Left ventricle myocardium superior (tissue), 1 donor: ENCODE measurements at regions of chr3 and their contacts with region 1.

Region 1: DNA sequence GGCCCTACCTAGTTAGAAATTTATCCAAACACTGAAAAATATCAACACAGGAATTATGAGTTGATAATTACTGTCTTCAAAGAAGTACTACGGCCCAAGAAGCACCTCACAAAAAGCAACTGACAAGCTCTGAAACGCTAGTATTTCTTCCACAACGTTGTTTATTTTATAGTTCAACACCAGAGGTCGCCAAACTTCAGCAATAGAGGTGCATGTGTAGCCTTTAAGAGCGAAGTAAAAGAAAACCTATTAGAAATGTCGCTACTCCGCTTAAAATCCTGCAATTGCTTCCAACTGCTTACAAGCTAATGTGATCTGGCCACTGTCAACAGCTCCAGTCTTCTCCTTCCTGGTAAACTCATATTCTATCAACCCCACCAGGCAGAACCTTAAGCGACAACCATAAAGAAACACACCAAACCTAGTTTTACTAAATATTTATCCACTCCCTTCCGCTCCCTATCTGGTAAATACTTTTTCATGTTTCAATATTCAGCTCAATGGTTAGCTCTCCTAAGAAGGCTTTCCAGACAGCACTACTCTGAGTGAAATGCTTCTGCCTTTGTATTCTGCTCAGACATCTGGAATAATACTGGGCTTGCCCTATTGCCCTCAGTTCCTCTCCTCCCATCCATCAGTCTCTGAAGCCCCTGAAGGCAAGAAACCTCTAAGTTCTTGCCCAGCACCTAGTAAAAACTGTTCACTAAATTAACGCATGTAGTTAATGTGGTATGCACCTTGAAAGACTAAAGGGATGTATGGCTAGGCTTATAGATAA is 110.2 kb downstream of the NR1I2 start:
- DNase-seq: no peak
- ATAC-seq: peak; percentile 85

Region 2: GRCh38 chr3:120182724-120183524 is 290.8 kb after region 1 on chr3:
- intact Hi-C with region 1: loop called (anchors 5 kb)
- DNase-seq: no peak
- ATAC-seq: peak; percentile 43

Region 3: DNA sequence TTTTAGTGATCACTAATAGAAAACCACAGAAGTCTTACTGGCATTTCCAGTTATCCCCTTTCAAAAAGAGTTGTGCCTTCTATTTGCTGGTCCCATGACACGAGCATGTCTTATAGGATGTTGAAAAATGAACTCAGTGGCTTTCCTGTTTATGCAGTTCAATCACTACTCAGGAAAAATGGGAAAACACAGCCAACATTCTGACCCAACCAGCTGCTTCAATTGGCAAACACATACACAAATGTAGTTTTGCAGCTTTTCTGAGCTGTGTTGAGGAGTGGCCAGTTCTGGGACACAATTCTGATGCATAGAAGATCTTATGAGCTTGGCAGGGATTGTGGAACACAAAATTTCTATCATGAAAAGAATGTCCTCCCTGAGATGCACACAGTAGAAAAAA is 518.4 kb after region 1 on chr3:
- intact Hi-C with region 1: no loop called
- DNase-seq: no peak
- ATAC-seq: no peak